Activated CD4-positive, alpha-beta memory T cell treated with anti-CD3 and anti-CD28 coated beads for 36 hours (primary cell): ENCODE measurements at regions of chr20 and their contacts with region 1.

Region 1: DNA sequence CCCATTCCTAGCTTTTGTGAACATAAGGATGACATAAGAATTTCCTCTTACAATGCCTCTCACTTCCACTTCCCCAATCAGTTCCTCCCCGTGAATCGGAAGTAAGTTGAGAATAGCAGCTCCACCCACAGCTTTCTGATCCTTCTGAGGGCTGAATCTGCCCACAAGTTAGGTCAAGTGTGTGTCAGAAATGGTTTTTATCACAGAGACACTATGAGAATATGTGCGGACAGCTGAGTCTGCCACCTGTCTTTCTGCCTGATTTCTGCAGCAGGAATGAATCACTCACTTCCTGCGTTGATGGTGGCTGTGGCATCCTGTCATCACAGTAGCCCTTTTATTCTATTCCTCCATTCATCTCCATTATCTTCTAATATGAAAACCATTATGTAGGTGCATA is 70.2 kb downstream of the RIN2 start:
- DNase-seq: peak; percentile 63
- H3K4me3 Mint-ChIP-seq: no peak overlapping the region
- H3K27ac Mint-ChIP-seq: peak overlapping the region; percentile 60
- H3K4me1 Mint-ChIP-seq: peaks cover 24% of the 10 kb centered on the region
- H3K27me3 Mint-ChIP-seq: peaks cover 5% of the 10 kb centered on the region

Region 2: GRCh38 chr20:19735446-19735845 is 92.8 kb before region 1 on chr20:
- CTCF ChIA-PET with region 1: no interaction called
- POLR2A ChIA-PET with region 1: no interaction called
- intact Hi-C with region 1: loop called (anchors 1 kb)
- DNase-seq: peak; percentile 70
- H3K4me3 Mint-ChIP-seq: no peak overlapping the region
- H3K27ac Mint-ChIP-seq: peak overlapping the region; percentile 7
- H3K4me1 Mint-ChIP-seq: peaks cover 19% of the 10 kb centered on the region
- H3K27me3 Mint-ChIP-seq: peaks cover 8% of the 10 kb centered on the region

Region 3: DNA sequence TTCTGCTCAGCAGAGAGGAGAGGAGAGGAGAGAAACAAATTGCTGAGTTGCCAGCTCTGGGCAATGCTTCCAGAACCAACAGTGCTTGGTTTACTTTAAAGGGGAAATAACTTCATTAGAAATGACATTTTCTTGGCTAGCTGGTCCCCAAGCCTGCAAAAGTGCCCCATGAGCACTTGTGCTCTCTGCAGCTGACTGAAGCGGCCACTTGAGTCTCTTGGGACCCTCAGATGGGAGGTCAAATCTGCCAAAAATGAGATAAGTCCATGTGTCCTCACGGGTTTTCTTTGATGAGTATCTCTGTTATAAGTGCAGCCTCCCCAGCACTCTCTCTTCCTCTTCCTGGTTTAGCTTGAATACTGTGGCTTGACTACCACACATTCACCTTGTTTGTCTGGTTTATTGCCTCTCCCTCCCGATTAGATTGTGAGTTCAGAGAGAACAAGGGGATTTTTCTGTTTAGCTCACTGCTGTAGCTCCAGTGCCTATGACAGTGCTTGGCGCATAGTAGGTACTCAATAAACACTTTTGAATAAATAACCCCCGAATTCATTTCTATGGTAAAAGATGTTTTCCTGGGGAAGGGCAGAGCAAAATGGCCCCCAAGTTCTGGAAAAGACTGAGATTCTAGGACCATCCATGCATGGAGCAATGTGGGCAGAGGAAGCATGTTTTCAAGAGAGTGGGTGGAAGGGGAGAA is 77.2 kb before region 1 on chr20:
- CTCF ChIA-PET with region 1: no interaction called
- POLR2A ChIA-PET with region 1: no interaction called
- intact Hi-C with region 1: no loop called
- DNase-seq: no peak
- H3K4me3 Mint-ChIP-seq: no peak overlapping the region
- H3K27ac Mint-ChIP-seq: no peak overlapping the region
- H3K4me1 Mint-ChIP-seq: no peaks in the 10 kb centered on the region
- H3K27me3 Mint-ChIP-seq: peaks cover 16% of the 10 kb centered on the region